Left ventricle myocardium inferior (tissue), 1 donor: ENCODE measurements at regions of chr13 and their contacts with region 1.

Region 1: GRCh38 chr13:112942689-112943308 is 26.2 kb upstream of the MCF2L start:
- DNase-seq: peak; percentile 97
- H3K4me3 ChIP-seq: peak overlapping the region; percentile 74
- H3K27ac ChIP-seq: peak overlapping the region; percentile 81
- H3K4me1 ChIP-seq: peaks cover 15% of the 10 kb centered on the region
- H3K27me3 ChIP-seq: peaks cover 6% of the 10 kb centered on the region
- CTCF ChIP-seq: peak; percentile 97

Region 2: GRCh38 chr13:112341976-112342735 is 600.6 kb before region 1 on chr13:
- intact Hi-C with region 1: no loop called
- DNase-seq: no peak
- H3K4me3 ChIP-seq: no peak overlapping the region
- H3K27ac ChIP-seq: no peak overlapping the region
- H3K4me1 ChIP-seq: no peaks in the 10 kb centered on the region
- H3K27me3 ChIP-seq: peaks cover 92% of the 10 kb centered on the region
- CTCF ChIP-seq: no peak

Region 3: GRCh38 chr13:113029487-113030258 is 86.9 kb after region 1 on chr13:
- intact Hi-C with region 1: loop called (anchors 10 kb)
- DNase-seq: no peak
- H3K4me3 ChIP-seq: no peak overlapping the region
- H3K27ac ChIP-seq: no peak overlapping the region
- H3K4me1 ChIP-seq: peaks cover 6% of the 10 kb centered on the region
- H3K27me3 ChIP-seq: no peaks in the 10 kb centered on the region
- CTCF ChIP-seq: peak; percentile 88

Region 4: DNA sequence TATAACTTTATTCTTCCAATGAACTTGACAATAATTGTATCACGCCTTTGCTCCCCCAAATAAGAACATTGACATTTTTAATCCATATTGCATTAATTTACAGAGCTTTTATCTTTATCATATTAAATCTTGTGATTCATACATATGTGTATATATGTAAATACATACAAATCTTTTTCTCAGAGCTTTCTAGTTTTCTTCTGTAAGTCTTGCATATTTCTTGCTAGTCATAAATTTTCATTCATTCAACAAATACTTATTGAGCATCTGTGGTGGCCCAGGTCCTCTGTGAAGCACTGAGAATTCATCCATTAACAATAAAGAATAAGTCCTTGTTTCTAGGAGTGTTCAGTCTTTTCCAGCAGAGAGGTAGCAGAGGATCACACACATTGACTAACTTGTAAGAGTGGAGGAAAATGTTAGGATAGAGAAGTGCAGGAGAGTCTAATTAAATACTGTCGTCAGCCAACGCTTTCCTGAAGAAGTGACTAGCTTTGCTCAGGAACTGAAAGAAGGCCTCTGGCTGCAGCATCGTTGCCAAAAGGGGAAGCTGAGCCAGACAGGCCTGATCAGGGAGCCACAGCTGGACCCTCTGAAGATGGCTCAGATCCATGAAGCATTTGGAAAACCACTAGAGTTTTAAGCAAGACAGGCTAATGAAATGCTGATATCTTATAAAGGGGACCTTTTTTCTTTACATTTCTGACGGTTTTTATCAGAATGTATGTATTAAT is 315.7 kb after region 1 on chr13:
- intact Hi-C with region 1: no loop called
- DNase-seq: no peak
- H3K4me3 ChIP-seq: no peak overlapping the region
- H3K27ac ChIP-seq: no peak overlapping the region
- H3K4me1 ChIP-seq: no peaks in the 10 kb centered on the region
- H3K27me3 ChIP-seq: no peaks in the 10 kb centered on the region
- CTCF ChIP-seq: no peak